ENCODE measurements at regions of chrX and their contacts with region 1.

Region 1: GRCh38 chrX:103376118-103376978 is at the start of gene BEX3:
- DNase-seq: no peak
- H3K4me3 ChIP-seq: peak within 1 kb of the TSS; percentile 60 to 69 (median 66)
- H3K27ac ChIP-seq: peak within 1 kb of the TSS; percentile 55
- H3K4me1 ChIP-seq: peaks cover 7% of the 10 kb centered on the region
- H3K27me3 ChIP-seq: no peaks in the 10 kb centered on the region
- CTCF ChIP-seq: no peak
- total RNA-seq, gene BEX3: 93.4 to 146 TPM

Region 2: GRCh38 chrX:103343105-103343504 is 33.2 kb before region 1 on chrX:
- CTCF ChIA-PET with region 1: no interaction called
- dilution Hi-C with region 1: no loop called
- in situ Hi-C with region 1: no loop called
- intact Hi-C with region 1: loop called (anchors 2 kb)
- DNase-seq: peak; percentile 28
- H3K4me3 ChIP-seq: no peak overlapping the region
- H3K27ac ChIP-seq: no peak overlapping the region
- H3K4me1 ChIP-seq: no peaks in the 10 kb centered on the region
- H3K27me3 ChIP-seq: no peaks in the 10 kb centered on the region
- CTCF ChIP-seq: peak; percentile 74 to 83

Region 3: GRCh38 chrX:103356130-103356798 is 20.1 kb before region 1 on chrX and contains the start of gene TCEAL9:
- CTCF ChIA-PET with region 1: no interaction called
- dilution Hi-C with region 1: no loop called
- in situ Hi-C with region 1: no loop called
- intact Hi-C with region 1: no loop called
- DNase-seq: peak; percentile 46
- H3K4me3 ChIP-seq: peak within 1 kb of the TSS; percentile 50 to 64 (median 60)
- H3K27ac ChIP-seq: peak within 1 kb of the TSS; percentile 80
- H3K4me1 ChIP-seq: no peaks in the 10 kb centered on the region
- H3K27me3 ChIP-seq: no peaks in the 10 kb centered on the region
- CTCF ChIP-seq: no peak
- total RNA-seq, gene TCEAL9: 44.5 to 71.1 TPM

Region 4: DNA sequence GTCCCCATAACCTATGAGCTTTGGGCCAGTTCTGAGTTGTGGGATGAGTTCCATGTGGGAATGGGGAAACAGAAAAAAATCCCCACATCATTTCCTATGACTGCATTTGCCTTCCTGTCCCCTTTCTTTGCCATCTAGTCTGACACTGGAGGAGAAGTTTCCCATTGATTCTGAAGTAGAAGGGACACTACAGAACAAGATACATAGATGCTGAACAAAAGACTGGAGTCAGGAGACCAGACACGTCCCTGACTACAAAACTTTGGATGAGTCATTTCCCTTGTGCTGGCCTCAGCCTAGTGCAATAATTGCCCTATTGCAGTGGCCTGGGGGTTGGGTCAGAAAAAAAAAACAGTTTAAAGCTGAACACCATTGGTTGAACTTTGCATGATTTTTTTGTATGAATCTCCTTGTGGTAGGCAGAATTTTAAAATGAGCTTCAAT is 22.1 kb after region 1 on chrX:
- CTCF ChIA-PET with region 1: no interaction called
- dilution Hi-C with region 1: no loop called
- in situ Hi-C with region 1: no loop called
- intact Hi-C with region 1: loop called (anchors 2 kb)
- DNase-seq: peak; percentile 79
- H3K4me3 ChIP-seq: no peak overlapping the region
- H3K27ac ChIP-seq: peak overlapping the region; percentile 55
- H3K4me1 ChIP-seq: peaks cover 17% of the 10 kb centered on the region
- H3K27me3 ChIP-seq: no peaks in the 10 kb centered on the region
- CTCF ChIP-seq: no peak

Region 5: DNA sequence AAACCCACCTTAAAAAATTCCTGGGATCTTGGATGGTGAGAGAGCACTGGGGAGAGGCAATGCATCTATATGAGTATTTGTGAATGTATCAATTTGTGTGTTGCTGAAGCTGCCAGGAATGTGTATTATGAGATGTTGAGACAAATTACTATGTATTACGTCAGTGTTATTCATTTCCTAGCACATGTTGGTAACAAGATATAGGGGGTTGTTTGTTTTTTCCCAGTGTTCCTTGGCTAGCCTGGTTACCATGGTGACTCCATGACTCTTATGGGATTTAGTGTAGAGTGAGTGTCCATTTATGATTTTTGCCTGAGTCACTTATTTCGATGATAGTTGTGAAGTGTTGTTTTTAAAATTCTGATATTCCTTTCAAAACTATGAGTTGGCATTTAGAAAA is 77.3 kb after region 1 on chrX:
- CTCF ChIA-PET with region 1: no interaction called
- dilution Hi-C with region 1: no loop called
- in situ Hi-C with region 1: no loop called
- intact Hi-C with region 1: loop called (anchors 2 kb)
- DNase-seq: peak; percentile 93
- H3K4me3 ChIP-seq: no peak overlapping the region
- H3K27ac ChIP-seq: peak overlapping the region; percentile 93
- H3K4me1 ChIP-seq: peaks cover 5% of the 10 kb centered on the region
- H3K27me3 ChIP-seq: no peaks in the 10 kb centered on the region
- CTCF ChIP-seq: no peak

Region 6: GRCh38 chrX:105018865-105019264 is 1642.5 kb after region 1 on chrX:
- CTCF ChIA-PET with region 1: no interaction called
- dilution Hi-C with region 1: no loop called
- in situ Hi-C with region 1: no loop called
- intact Hi-C with region 1: no loop called
- DNase-seq: peak; percentile 3
- H3K4me3 ChIP-seq: no peak overlapping the region
- H3K27ac ChIP-seq: no peak overlapping the region
- H3K4me1 ChIP-seq: peaks cover 9% of the 10 kb centered on the region
- H3K27me3 ChIP-seq: no peaks in the 10 kb centered on the region
- CTCF ChIP-seq: no peak

Measured in mammary epithelial cell (primary cell).